ENCODE measurements at regions of chr17 and their contacts with region 1.

Region 1: GRCh38 chr17:37373530-37374159 is 2.1 kb upstream of the C17orf78 start:
- DNase-seq: peak; percentile 82 to 91
- ATAC-seq: peak; percentile 98 to 99
- H3K4me3 ChIP-seq: no peak overlapping the region
- H3K27ac ChIP-seq: peak overlapping the region in 1 of 2 experiments; percentile 54; a peak in 3 of 6 replicates
- H3K4me1 ChIP-seq: peaks cover 2% of the 10 kb centered on the region; the same call in 1 of the 3 replicates
- CTCF ChIP-seq: peak; percentile 100
- EP300 ChIP-seq: no peak
- POLR2A ChIP-seq: no peak
- RAD21 ChIP-seq: peak; percentile 99 to 100

Region 2: GRCh38 chr17:37239690-37240334 is 133.8 kb before region 1 on chr17:
- CTCF ChIA-PET with region 1: interaction called, 11 read pairs
- POLR2A ChIA-PET with region 1: interaction called, 3 read pairs
- DNase-seq: peak; percentile 21 to 38
- ATAC-seq: peak; percentile 57 to 64; a peak in 4 of 6 replicates
- H3K4me3 ChIP-seq: no peak overlapping the region
- H3K27ac ChIP-seq: no peak overlapping the region
- H3K4me1 ChIP-seq: 0 out of 3 replicates have a peak, but pooled peaks cover 6% of the 10 kb centered on the region
- CTCF ChIP-seq: peak; percentile 86
- EP300 ChIP-seq: no peak
- POLR2A ChIP-seq: no peak
- RAD21 ChIP-seq: peak; percentile 44 to 60

Region 3: GRCh38 chr17:37339321-37339720 is 34.3 kb before region 1 on chr17:
- CTCF ChIA-PET with region 1: interaction called, 25 read pairs
- POLR2A ChIA-PET with region 1: no interaction called
- DNase-seq: no peak
- ATAC-seq: peak; percentile 40 to 47; a peak in 3 of 6 replicates
- H3K4me3 ChIP-seq: no peak overlapping the region
- H3K27ac ChIP-seq: no peak overlapping the region; a peak in 1 of 6 replicates
- H3K4me1 ChIP-seq: peaks cover 17% of the 10 kb centered on the region
- CTCF ChIP-seq: no peak
- EP300 ChIP-seq: no peak
- POLR2A ChIP-seq: no peak
- RAD21 ChIP-seq: no peak

Region 4: DNA sequence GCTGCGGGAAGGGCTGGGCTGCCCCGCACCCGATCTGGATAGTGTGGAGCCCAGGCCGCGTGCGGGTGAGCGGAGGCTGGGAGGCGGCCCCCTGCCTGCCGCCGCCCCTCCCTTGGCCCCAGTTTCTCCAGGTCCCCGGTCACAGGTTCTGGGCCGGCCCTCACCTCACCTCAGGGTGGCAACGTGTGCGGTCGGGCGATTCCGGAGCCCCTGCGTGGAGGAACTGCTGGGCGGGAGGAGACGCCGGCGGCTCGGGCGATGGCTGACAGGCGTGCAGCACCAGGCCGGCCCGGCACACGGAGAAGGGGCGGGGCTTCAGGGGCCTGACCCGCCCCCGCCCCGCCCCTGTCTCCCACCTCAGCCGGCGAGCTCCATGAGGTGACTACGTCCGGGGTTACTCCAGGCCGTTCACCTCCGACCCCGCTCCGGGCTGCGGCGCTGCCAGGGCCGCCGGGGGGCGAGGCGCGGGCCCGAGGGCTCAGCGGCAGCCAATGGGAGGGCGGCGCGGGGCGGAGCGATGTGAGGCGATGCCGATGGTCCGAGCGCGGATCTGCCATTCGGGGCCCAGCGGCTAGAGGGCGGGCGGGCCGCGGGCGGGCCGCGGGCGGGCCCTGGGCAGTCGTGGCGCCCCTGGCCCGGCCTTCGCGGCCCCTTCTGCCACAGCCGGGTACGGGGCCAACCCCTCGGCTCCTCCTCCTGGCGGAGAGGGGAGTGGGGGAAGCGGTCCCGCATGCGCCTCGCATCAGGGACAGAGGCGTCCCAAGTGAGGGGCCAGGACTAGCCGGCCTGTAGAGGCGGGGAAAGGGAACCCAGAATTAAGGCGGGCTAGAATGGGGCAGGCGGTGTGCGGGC is 14.6 kb before region 1 on chr17:
- CTCF ChIA-PET with region 1: interaction called, 83 read pairs
- POLR2A ChIA-PET with region 1: interaction called, 17 read pairs
- DNase-seq: peak; percentile 96 to 98
- ATAC-seq: peak; percentile 89 to 90
- H3K4me3 ChIP-seq: peak overlapping the region; percentile 88
- H3K27ac ChIP-seq: peak overlapping the region; percentile 92 to 94
- H3K4me1 ChIP-seq: peaks cover 42% of the 10 kb centered on the region
- CTCF ChIP-seq: peak; percentile 9; the same call in 1 of the 3 replicates
- EP300 ChIP-seq: no peak
- POLR2A ChIP-seq: peak; percentile 86
- RAD21 ChIP-seq: no peak

Region 5: DNA sequence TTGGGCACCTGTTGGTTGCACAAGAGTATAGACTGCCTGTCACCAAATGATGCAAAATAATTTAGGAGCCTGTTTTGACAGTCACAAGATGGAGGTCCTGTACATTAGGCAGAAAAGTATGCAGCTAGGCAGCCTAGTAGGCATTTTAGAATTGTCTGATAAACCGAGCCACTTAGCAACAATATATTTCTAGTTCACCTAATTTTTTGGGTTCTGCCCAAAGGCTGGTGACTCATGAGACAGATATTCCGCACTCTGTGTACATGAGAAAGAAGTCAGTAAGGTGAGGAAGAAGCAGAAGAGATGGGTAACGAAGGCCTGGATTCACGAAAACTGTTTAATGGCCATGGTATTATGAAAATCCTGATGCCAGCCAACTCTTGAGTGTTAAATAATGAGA is 25.8 kb after region 1 on chr17:
- CTCF ChIA-PET with region 1: interaction called, 204 read pairs
- POLR2A ChIA-PET with region 1: no interaction called
- DNase-seq: no peak
- ATAC-seq: no peak
- H3K4me3 ChIP-seq: no peak overlapping the region
- H3K27ac ChIP-seq: no peak overlapping the region
- H3K4me1 ChIP-seq: peaks cover 8% of the 10 kb centered on the region
- CTCF ChIP-seq: no peak
- EP300 ChIP-seq: no peak
- POLR2A ChIP-seq: no peak
- RAD21 ChIP-seq: no peak

Region 6: DNA sequence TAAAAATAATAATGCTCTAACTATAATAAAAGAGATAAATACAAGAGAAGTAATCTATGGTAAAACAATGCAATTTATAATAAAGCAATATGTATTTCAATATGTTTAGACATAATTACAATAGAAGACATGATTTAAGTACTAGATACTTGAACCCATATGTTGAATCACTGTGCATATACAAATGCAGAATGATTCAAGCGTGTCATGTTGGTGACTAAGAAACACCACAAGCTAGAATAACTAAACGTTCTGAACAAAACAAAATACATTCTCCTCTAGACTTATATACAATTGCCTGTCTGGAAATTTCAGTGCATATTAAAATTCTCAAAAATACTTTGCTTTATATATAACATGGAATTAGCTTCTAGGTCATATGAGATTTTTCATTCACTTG is 44.2 kb after region 1 on chr17:
- CTCF ChIA-PET with region 1: interaction called, 30 read pairs
- POLR2A ChIA-PET with region 1: no interaction called
- DNase-seq: no peak
- ATAC-seq: no peak
- H3K4me3 ChIP-seq: no peak overlapping the region
- H3K27ac ChIP-seq: no peak overlapping the region
- H3K4me1 ChIP-seq: peaks cover 4% of the 10 kb centered on the region; the same call in 2 of the 3 replicates
- CTCF ChIP-seq: no peak
- EP300 ChIP-seq: no peak
- POLR2A ChIP-seq: no peak
- RAD21 ChIP-seq: no peak

Region 7: DNA sequence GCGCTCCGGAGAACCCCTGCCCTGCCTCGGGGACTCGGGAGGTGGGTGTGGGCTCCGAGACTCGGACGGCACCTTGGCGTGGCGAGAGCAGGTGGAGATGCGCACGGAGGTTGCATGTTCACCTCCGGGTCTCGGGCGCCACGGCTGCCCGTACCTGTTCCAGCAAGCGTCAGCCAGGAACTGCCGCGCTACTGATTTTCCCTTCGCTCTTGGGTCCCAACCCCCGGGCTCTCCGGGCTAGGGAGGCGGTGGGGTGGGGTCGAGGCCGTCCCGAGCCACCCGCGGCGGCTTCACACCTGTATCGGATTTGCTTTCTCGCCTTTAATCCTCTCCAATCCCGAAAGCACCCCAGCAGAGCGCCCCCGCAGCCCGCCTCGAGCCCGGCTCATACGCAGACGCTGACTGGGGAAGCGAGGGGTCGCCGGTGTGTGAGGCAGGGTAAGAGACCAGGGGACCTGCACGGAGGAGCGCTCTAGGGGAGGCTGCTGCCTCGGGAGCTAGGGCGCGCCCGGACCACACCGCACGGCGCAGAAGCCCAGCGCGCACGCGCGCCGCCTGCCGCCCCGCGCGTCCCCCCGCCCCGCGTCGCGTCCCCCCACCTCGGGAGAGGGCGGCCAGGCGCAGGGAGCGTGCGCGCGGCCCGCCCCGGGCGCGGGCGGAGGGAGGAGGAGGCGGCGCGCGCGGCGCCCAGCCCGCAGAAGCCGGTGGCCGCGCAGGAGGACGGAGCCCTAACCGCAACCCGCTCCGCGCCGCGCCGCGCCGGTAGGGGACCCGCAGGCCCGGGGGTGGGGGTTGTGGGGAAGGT is 115.8 kb after region 1 on chr17 and contains the start of gene DUSP14:
- CTCF ChIA-PET with region 1: interaction called, 11 read pairs
- POLR2A ChIA-PET with region 1: no interaction called
- DNase-seq: peak; percentile 83 to 90
- ATAC-seq: peak; percentile 59 to 74
- H3K4me3 ChIP-seq: peak within 1 kb of the TSS; percentile 67
- H3K27ac ChIP-seq: peak within 1 kb of the TSS; percentile 89 to 95
- H3K4me1 ChIP-seq: peaks cover 32% of the 10 kb centered on the region
- CTCF ChIP-seq: no peak; the same call in 2 of the 3 replicates
- EP300 ChIP-seq: no peak
- POLR2A ChIP-seq: peak; percentile 78
- RAD21 ChIP-seq: no peak
- polyA plus RNA-seq, gene DUSP14: 35.5 and 38.0 TPM in 2 replicates

Measured in A549 (cell line).